HepG2 (cell line): ENCODE measurements at regions of chr1 and their contacts with region 1.

Region 1: DNA sequence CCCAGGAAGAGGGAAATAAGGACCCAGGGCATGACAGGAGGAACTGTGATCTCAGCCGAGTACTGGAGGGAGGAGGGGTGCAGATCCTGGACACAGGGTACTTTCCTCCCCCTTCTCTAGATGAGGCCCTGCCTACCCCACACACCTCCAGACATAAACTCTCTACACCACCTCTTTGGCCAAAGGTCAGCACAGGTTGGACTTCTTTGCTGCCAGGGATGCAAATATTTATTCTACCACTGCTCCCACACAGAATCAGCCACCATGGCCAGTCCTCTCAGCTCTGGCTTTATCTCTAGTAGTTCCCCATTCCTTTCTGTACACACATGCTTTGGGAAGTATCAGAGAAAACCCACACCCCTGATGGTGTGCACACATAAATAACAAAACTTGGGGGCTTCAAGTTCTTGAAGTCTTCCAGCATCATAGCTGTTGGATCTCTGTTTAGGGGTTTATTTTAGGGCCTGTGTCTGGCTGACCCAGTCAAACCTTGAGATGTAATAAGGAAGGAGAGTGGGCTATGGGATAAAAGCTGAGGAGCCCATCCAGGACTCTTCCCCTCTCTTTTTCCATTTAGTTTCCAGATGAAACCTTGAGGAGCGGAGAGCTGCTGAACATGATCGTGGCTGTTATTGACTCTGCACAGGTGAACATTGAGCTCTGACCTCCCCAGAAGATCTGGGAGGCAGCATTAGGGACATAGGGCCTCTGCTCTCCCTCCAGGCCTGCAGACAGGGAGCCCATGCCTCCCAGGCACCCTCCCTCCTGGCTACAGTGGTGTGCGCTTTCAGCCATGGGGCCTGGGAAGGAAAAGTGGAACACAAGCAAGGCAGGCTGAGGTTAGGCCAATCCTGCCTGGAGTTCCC is 6.7 kb upstream of the SLC27A3 start:
- DNase-seq: peak; percentile 87
- ATAC-seq: peak; percentile 89
- H3K4me3 ChIP-seq: peak overlapping the region in 2 of 3 experiments; percentile 13 to 27; a peak in 3 of 6 replicates
- H3K27ac ChIP-seq: peak overlapping the region; percentile 82
- H3K4me1 ChIP-seq: peaks cover 54% of the 10 kb centered on the region
- H3K27me3 ChIP-seq: no peaks in the 10 kb centered on the region
- CTCF ChIP-seq: no peak
- EP300 ChIP-seq: peak in 1 of 2 experiments; percentile 71; a peak in 2 of 4 replicates
- POLR2A ChIP-seq: peak in 1 of 2 experiments; percentile 35; a peak in 1 of 4 replicates
- RAD21 ChIP-seq: no peak

Region 2: GRCh38 chr1:153677718-153678505 is 90.6 kb before region 1 on chr1:
- CTCF ChIA-PET with region 1: interaction called, 11 read pairs
- POLR2A ChIA-PET with region 1: interaction called, 3 read pairs
- in situ Hi-C with region 1: loop called (anchors 5 kb)
- intact Hi-C with region 1: loop called (anchors 1 kb)
- DNase-seq: no peak
- ATAC-seq: peak; percentile 58
- H3K4me3 ChIP-seq: peak overlapping the region in 2 of 3 experiments; percentile 57 to 72; a peak in 4 of 6 replicates
- H3K27ac ChIP-seq: no peak overlapping the region
- H3K4me1 ChIP-seq: peaks cover 25% of the 10 kb centered on the region
- H3K27me3 ChIP-seq: peaks cover 20 to 51% of the 10 kb centered on the region in 2 experiments
- CTCF ChIP-seq: peak; percentile 92
- EP300 ChIP-seq: no peak
- POLR2A ChIP-seq: no peak
- RAD21 ChIP-seq: peak; percentile 88

Region 3: GRCh38 chr1:153742411-153743142 is 26.0 kb before region 1 on chr1:
- CTCF ChIA-PET with region 1: no interaction called
- POLR2A ChIA-PET with region 1: interaction called, 11 read pairs
- in situ Hi-C with region 1: no loop called
- intact Hi-C with region 1: no loop called
- DNase-seq: peak; percentile 87
- ATAC-seq: peak; percentile 98
- H3K4me3 ChIP-seq: no peak overlapping the region; a peak in 1 of 6 replicates
- H3K27ac ChIP-seq: peak overlapping the region; percentile 34
- H3K4me1 ChIP-seq: peaks cover 36% of the 10 kb centered on the region
- H3K27me3 ChIP-seq: no peaks in the 10 kb centered on the region
- CTCF ChIP-seq: no peak
- EP300 ChIP-seq: peak in 1 of 2 experiments; percentile 37; a peak in 1 of 4 replicates
- POLR2A ChIP-seq: no peak
- RAD21 ChIP-seq: no peak

Region 4: GRCh38 chr1:153783233-153784190 is 15.0 kb after region 1 on chr1:
- CTCF ChIA-PET with region 1: no interaction called
- POLR2A ChIA-PET with region 1: interaction called, 16 read pairs
- in situ Hi-C with region 1: no loop called
- intact Hi-C with region 1: no loop called
- DNase-seq: peak; percentile 71
- ATAC-seq: peak; percentile 91
- H3K4me3 ChIP-seq: peak overlapping the region; percentile 72 to 78 (median 76)
- H3K27ac ChIP-seq: peak overlapping the region; percentile 79
- H3K4me1 ChIP-seq: peaks cover 46% of the 10 kb centered on the region
- H3K27me3 ChIP-seq: no peaks in the 10 kb centered on the region
- CTCF ChIP-seq: peak; percentile 14; the same call in 1 of the 2 replicates
- EP300 ChIP-seq: no peak; a peak in 1 of 4 replicates
- POLR2A ChIP-seq: peak; percentile 85 to 96
- RAD21 ChIP-seq: no peak